GM12878 (cell line): ENCODE measurements at regions of chr5 and their contacts with region 1.

Region 1: GRCh38 chr5:123538670-123539459 is 26.9 kb downstream of the CSNK1G3 start:
- DNase-seq: no peak
- ATAC-seq: peak; percentile 33
- H3K4me3 ChIP-seq: no peak overlapping the region
- H3K27ac ChIP-seq: no peak overlapping the region
- H3K4me1 ChIP-seq: no peaks in the 10 kb centered on the region
- H3K27me3 ChIP-seq: no peaks in the 10 kb centered on the region
- CTCF ChIP-seq: no peak
- EP300 ChIP-seq: no peak
- POLR2A ChIP-seq: no peak
- RAD21 ChIP-seq: no peak

Region 2: DNA sequence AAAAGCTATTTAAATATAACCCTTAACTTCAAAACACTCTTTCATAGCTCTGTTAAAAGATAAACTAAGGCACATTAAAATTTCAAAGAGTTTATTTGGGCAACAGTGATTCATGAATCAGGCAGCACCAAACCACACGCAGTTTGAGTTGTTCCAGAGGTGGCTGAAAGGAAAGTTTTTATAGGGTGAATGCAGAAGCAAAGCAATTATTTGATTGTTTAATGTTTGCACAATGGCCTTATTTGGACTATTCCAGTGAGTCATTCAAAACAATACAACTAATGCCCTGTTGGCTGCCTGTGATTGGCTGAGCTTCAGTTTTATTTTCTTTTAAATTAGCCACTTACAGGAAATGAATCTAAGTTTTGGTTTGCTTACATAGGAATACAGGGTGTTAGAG is 241.0 kb before region 1 on chr5:
- CTCF ChIA-PET with region 1: no interaction called
- POLR2A ChIA-PET with region 1: no interaction called
- RAD21 ChIA-PET with region 1: no interaction called
- SMC1A ChIA-PET with region 1: no interaction called
- in situ Hi-C with region 1: no loop called
- intact Hi-C with region 1: no loop called
- DNase-seq: no peak
- ATAC-seq: no peak
- H3K4me3 ChIP-seq: no peak overlapping the region
- H3K27ac ChIP-seq: no peak overlapping the region
- H3K4me1 ChIP-seq: no peaks in the 10 kb centered on the region
- H3K27me3 ChIP-seq: no peaks in the 10 kb centered on the region; a peak in 1 of 4 replicates
- CTCF ChIP-seq: no peak
- EP300 ChIP-seq: no peak
- POLR2A ChIP-seq: no peak
- RAD21 ChIP-seq: no peak

Region 3: GRCh38 chr5:123496892-123497291 is 42.0 kb before region 1 on chr5:
- CTCF ChIA-PET with region 1: no interaction called
- POLR2A ChIA-PET with region 1: no interaction called
- RAD21 ChIA-PET with region 1: no interaction called
- SMC1A ChIA-PET with region 1: no interaction called
- in situ Hi-C with region 1: no loop called
- intact Hi-C with region 1: no loop called
- DNase-seq: no peak
- ATAC-seq: no peak
- H3K4me3 ChIP-seq: no peak overlapping the region
- H3K27ac ChIP-seq: no peak overlapping the region
- H3K4me1 ChIP-seq: no peaks in the 10 kb centered on the region
- H3K27me3 ChIP-seq: no peaks in the 10 kb centered on the region
- CTCF ChIP-seq: no peak
- EP300 ChIP-seq: no peak
- POLR2A ChIP-seq: no peak
- RAD21 ChIP-seq: no peak

Region 4: GRCh38 chr5:123527190-123527589 is 11.7 kb before region 1 on chr5:
- CTCF ChIA-PET with region 1: interaction called, 8 read pairs
- POLR2A ChIA-PET with region 1: interaction called, 3 read pairs
- RAD21 ChIA-PET with region 1: interaction called, 23 read pairs
- SMC1A ChIA-PET with region 1: interaction called, 18 read pairs
- in situ Hi-C with region 1: no loop called
- intact Hi-C with region 1: loop called (anchors 2 kb)
- DNase-seq: no peak
- ATAC-seq: peak; percentile 74
- H3K4me3 ChIP-seq: no peak overlapping the region
- H3K27ac ChIP-seq: no peak overlapping the region
- H3K4me1 ChIP-seq: peaks cover 13% of the 10 kb centered on the region
- H3K27me3 ChIP-seq: no peaks in the 10 kb centered on the region
- CTCF ChIP-seq: no peak
- EP300 ChIP-seq: no peak
- POLR2A ChIP-seq: no peak
- RAD21 ChIP-seq: no peak